ENCODE measurements at regions of chr5 and their contacts with region 1.

Region 1: DNA sequence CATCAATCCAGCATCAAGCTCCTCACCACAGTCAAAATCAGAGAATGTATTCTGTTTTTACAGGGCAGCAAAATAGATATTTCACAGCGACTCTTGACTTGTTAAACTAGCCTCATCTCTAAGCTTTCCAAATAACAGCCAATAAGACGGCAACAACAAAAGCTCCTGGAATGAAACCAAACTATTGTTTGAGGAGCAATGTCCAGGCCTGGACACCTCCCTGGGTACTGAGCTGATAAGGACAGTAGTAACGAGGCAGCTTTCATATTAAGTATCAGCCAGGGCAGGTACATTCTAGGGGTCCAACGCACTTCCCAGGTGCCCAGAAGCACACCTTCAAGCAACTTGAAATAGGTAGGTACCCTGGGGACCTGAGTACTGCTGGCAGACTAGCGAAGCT is 260.3 kb downstream of the ENC1 start:
- DNase-seq: peak; percentile 66
- ATAC-seq: peak; percentile 96
- H3K4me3 ChIP-seq: no peak overlapping the region
- H3K27ac ChIP-seq: no peak overlapping the region
- H3K4me1 ChIP-seq: peaks cover 37% of the 10 kb centered on the region
- H3K27me3 ChIP-seq: no peaks in the 10 kb centered on the region
- CTCF ChIP-seq: no peak
- EP300 ChIP-seq: peak in 1 of 2 experiments; percentile 31; a peak in 1 of 4 replicates
- POLR2A ChIP-seq: no peak
- RAD21 ChIP-seq: no peak

Region 2: DNA sequence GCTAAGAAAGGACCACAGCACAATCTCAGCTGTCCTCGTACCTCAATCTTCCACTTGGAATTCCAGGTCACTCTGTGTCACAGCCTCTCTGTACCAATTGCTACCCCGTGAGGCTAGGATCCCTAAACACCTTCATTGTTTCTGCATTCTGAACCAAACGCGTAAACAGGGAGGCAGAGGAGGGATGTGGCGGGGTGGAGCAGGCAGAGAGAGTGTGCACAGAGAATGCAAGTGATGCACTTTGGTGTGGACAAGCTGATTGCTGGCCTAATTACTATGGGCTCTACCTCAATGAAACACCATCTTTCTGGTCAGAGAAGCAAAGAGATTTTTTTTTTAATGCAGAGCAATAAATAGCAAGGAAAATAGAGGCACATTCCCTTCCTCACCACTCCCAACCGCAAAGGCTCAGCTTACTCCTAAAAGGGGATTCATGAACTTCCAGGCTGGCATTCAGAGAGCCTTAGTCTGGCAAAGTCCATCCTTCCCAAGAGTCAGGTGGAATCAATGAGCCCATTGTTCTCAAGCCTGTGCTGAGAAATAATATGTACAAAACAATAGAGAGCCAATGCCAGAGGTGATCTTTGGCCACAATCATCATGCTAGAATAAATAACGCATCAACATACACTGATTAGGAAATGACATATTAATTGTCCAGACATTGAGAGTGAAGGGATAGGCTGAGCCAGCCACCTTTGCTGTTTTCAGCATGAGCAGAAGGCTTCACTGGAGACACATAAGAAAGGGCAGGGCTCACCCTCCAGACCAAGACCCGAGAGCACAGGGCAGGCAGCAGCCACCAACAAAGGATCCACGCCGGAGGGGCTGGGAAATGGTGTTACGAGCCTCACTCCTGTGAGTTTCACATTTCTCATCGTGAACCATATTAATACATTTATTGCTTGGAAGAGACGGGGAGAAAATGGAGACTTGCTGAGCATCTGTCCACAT is 18.5 kb before region 1 on chr5:
- CTCF ChIA-PET with region 1: no interaction called
- POLR2A ChIA-PET with region 1: no interaction called
- in situ Hi-C with region 1: no loop called
- intact Hi-C with region 1: loop called (anchors 1 kb)
- DNase-seq: peak; percentile 97
- ATAC-seq: peak; percentile 94
- H3K4me3 ChIP-seq: peak overlapping the region in 1 of 3 experiments; percentile 23; a peak in 1 of 6 replicates
- H3K27ac ChIP-seq: peak overlapping the region; percentile 32
- H3K4me1 ChIP-seq: peaks cover 31% of the 10 kb centered on the region
- H3K27me3 ChIP-seq: 0 out of 5 replicates have a peak, but pooled peaks cover 0 to 1% of the 10 kb centered on the region in 2 experiments
- CTCF ChIP-seq: no peak
- EP300 ChIP-seq: peak in 1 of 2 experiments; percentile 40; a peak in 1 of 4 replicates
- POLR2A ChIP-seq: no peak
- RAD21 ChIP-seq: no peak

Measured in HepG2 (cell line).